Heart right ventricle (tissue), 16 donors: ENCODE measurements at regions of chr9 and their contacts with region 1.

Region 1: DNA sequence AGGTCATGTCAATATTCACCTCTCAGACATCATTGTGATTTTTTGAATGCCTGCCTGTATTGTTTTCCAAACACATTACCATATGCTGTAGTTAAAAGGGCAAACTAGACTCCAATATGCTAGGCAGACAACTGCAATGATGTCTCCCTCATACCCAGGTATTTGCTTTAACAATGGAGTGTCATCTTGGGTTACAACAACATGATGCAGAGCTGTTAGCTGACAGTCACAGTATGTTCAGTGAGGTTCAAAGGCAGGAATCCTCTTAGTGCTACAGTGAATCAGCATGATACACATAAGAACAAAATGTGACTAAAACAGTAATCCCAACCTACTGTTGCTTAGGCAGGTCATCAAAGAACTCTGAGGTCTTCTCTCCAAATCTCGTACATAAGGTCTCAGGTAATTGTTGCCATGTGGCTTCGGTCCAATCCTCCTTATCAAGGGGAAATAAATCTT is 24.0 kb downstream of the OR1J1 start:
- DNase-seq: no peak
- ATAC-seq: peak in 1 of 8 donors; percentile 27
- H3K4me3 ChIP-seq: no peak overlapping the region
- H3K27ac ChIP-seq: no peak overlapping the region
- H3K4me1 ChIP-seq: no peaks in the 10 kb centered on the region
- H3K27me3 ChIP-seq: peaks cover 0 to 16% (median 0%) of the 10 kb centered on the region in 7 donors
- CTCF ChIP-seq: no peak

Region 2: DNA sequence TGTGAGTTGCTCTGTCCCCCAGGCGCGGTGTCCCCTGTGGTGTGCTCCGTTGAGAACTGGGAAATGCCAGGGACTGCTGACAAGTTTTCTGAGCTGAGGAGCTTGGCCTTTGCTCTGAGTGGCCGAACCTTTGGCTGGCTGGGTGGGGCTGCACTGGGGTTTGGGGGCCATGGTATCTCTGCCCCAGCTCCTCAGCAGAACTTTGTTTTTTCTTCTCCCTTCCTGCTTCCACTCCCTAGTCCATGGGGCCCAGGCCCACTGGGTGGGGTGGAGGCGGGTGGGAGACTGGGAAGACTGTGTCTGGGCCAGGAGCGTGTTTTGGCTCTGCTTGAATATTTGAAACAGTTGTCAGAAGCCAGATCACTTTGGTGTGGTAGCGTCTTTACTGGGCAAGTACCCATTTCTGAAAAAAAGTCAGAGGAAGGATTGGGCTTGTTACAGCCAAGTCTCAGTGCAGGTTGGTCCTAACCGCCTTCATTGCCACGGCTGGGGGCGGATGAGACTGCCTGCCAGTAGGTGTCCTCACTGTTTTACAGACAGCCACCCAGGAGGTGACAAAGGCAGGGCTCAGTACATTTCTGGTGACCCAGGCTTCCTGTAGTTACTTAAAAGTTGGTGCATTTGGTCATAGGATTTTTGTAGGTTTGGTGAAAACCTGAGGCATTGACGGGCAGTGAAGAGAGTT is 709.6 kb before region 1 on chr9:
- intact Hi-C with region 1: no loop called
- DNase-seq: peak; percentile 67 to 75
- ATAC-seq: peak; percentile 43 to 83 (median 73)
- H3K4me3 ChIP-seq: peak overlapping the region; percentile 23 to 64 (median 52)
- H3K27ac ChIP-seq: peak overlapping the region; percentile 89 to 98 (median 94)
- H3K4me1 ChIP-seq: peaks cover 57 to 100% (median 90%) of the 10 kb centered on the region in 9 donors
- H3K27me3 ChIP-seq: no peaks in the 10 kb centered on the region
- CTCF ChIP-seq: peak; percentile 29 to 77 (median 54)

Region 3: DNA sequence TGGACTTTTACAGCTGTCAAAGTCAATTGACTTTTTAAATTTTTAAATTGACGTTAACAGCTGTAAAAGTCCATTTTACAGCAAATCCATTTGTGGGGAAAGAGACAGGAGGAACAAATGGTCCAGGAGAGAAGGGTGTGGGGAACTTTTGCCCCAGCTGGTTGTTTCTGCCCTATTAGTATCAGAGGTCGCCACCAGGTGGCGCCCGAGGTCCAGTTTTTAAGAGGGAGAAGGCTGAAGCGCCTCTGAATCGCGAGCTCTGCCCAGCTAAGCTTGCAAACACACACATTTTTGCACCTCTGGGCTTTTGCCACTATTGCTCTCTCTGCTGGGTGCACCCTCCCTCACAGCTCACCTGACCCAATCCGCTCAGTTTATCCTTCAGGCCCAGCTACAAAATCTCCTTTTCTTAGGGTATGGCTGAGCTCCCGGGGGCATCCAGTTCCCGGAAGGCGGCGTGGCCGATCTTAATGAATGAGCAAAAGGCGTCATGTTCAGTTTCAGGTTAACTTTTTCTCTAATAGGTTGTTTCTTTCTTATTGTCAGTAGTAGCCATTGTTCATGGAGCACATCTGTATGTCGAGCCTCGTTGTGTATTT is 354.3 kb before region 1 on chr9:
- intact Hi-C with region 1: loop called in 3 of 10 experiments (anchors 5 kb)
- DNase-seq: peak; percentile 79 to 85
- ATAC-seq: peak; percentile 54 to 91 (median 87)
- H3K4me3 ChIP-seq: peak overlapping the region in 2 of 10 donors; percentile 10 to 23
- H3K27ac ChIP-seq: no peak overlapping the region
- H3K4me1 ChIP-seq: peaks cover 0 to 12% (median 3%) of the 10 kb centered on the region in 9 donors
- H3K27me3 ChIP-seq: no peaks in the 10 kb centered on the region
- CTCF ChIP-seq: peak; percentile 81 to 93 (median 87)

Region 4: GRCh38 chr9:122125158-122125508 is 328.6 kb before region 1 on chr9:
- intact Hi-C with region 1: loop called in 7 of 10 experiments (anchors 5 to 10 kb)
- DNase-seq: peak; percentile 79 to 85
- ATAC-seq: peak; percentile 78 to 91 (median 84)
- H3K4me3 ChIP-seq: no peak overlapping the region
- H3K27ac ChIP-seq: no peak overlapping the region
- H3K4me1 ChIP-seq: peaks cover 12 to 47% (median 30%) of the 10 kb centered on the region in 9 donors
- H3K27me3 ChIP-seq: peaks cover 0 to 32% (median 3%) of the 10 kb centered on the region in 7 donors
- CTCF ChIP-seq: peak in 8 of 9 donors; percentile 90 to 98 (median 96)

Region 5: GRCh38 chr9:122350638-122351355 is 102.9 kb before region 1 on chr9:
- intact Hi-C with region 1: loop called in 1 of 10 experiments (anchors 5 kb)
- DNase-seq: peak; percentile 80 to 84
- ATAC-seq: peak; percentile 69 to 87 (median 84)
- H3K4me3 ChIP-seq: no peak overlapping the region
- H3K27ac ChIP-seq: no peak overlapping the region
- H3K4me1 ChIP-seq: peaks cover 7 to 32% (median 21%) of the 10 kb centered on the region in 9 donors
- H3K27me3 ChIP-seq: peaks cover 0 to 14% (median 0%) of the 10 kb centered on the region in 7 donors
- CTCF ChIP-seq: peak; percentile 96 to 99 (median 97)

Region 6: GRCh38 chr9:122360891-122361290 is 92.8 kb before region 1 on chr9:
- intact Hi-C with region 1: loop called in 1 of 10 experiments (anchors 10 kb)
- DNase-seq: no peak
- ATAC-seq: no peak
- H3K4me3 ChIP-seq: no peak overlapping the region
- H3K27ac ChIP-seq: no peak overlapping the region
- H3K4me1 ChIP-seq: peaks cover 0 to 8% (median 0%) of the 10 kb centered on the region in 9 donors
- H3K27me3 ChIP-seq: peaks cover 0 to 5% (median 0%) of the 10 kb centered on the region in 7 donors
- CTCF ChIP-seq: no peak

Region 7: GRCh38 chr9:122370869-122371755 is 82.6 kb before region 1 on chr9 and contains the start of gene PTGS1:
- intact Hi-C with region 1: loop called in 5 of 10 experiments (anchors 10 kb)
- DNase-seq: peak; percentile 43 to 63
- ATAC-seq: peak in 7 of 8 donors; percentile 54 to 75 (median 66)
- H3K4me3 ChIP-seq: peak within 1 kb of the TSS in 9 of 10 donors; percentile 29 to 66 (median 52)
- H3K27ac ChIP-seq: peak within 1 kb of the TSS in 2 of 10 donors; percentile 18 to 81
- H3K4me1 ChIP-seq: peaks cover 0 to 45% (median 23%) of the 10 kb centered on the region in 9 donors
- H3K27me3 ChIP-seq: peaks cover 0 to 17% (median 5%) of the 10 kb centered on the region in 7 donors
- CTCF ChIP-seq: no peak
- total RNA-seq, gene PTGS1: 1.1 to 15.6 (median 4.0) TPM